G401 (cell line): ENCODE measurements at regions of chr17 and their contacts with region 1.

Region 1: GRCh38 chr17:35312790-35313711 is 60.4 kb downstream of the SLFN11 start:
- DNase-seq: peak; percentile 57

Region 2: DNA sequence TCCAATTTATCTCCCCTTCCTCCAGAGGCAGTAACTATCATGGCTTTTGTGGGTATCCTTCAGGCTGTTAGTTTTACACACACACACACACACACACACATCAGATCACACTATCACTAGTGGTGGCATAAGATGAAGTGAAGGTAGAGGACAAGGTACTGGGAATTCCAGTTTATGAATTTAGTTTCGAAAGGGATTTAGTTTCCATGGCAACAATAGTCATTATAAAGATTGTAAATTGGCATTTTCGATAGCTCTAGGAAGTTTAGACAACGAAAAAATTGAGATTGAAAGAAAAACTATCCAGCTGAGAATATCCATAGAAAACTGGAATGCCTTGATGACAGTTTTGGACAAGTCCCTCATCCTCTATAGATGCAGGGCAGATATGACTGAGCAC is 39.4 kb before region 1 on chr17:
- in situ Hi-C with region 1: no loop called
- DNase-seq: no peak

Region 3: DNA sequence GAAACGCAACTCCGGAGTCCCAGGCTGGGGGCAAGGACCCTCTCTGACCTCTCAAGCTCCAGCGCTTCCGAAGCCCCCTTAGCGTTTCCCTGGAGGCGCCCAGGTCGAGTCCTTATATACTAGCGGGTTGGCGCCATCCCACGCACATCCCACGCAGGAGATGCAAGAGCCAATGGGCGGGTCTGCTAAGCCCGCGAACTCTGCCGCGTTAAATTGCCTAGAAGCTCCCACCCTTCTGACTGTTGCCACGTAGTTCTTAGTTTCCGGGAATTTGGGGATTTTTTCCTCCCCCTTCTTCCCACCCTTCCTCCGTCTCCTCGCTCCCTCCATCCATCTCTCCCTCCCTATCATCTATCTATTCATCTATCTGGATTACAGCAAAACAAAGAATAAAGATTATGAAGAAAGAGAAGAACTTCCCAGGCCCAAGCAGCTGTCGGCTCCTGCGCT is 60.5 kb after region 1 on chr17 and contains the start of gene SLFN11:
- in situ Hi-C with region 1: no loop called
- DNase-seq: peak; percentile 8
- total RNA-seq, gene SLFN11: not detected in 2 replicates

Region 4: GRCh38 chr17:35529866-35530265 is 216.8 kb after region 1 on chr17:
- in situ Hi-C with region 1: loop called (anchors 5 kb)
- DNase-seq: no peak